Mammary epithelial cell (primary cell): ENCODE measurements at regions of chr2 and their contacts with region 1.

Region 1: DNA sequence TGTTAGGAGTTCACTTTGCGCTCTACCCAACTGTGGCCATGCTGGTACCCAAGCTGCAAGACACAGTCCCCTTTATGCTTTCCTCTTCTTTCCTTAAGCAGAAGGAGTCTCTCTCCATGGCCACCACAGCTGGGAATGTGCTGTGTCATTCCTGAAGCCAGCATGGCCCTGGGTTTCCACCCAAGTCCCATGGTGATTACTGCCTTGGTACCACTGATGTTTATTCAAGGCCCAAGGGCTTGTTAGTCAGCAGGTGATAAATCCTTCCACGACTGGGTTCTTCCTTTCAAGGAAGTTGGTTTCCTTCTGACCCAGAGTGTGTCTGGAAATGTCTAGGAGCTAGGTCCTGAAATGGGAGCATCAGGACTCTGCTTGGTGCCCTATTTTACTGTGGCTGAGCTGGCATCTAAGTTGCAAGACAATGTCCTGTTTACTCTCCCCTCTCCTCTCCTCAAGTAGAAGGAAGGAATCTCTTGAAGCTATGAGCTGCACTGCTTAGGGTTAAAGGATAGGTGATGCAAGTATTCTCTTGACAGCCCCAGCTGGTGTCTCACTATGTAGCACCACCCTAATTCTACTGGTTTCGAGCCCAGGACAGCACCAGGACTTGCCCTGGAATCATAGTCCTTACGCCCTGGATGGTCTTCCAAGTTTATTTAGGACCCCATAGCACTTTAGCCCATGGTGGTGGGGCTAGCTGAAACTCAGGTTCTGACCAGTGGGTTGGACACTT is 18.7 kb upstream of the NUP35 start:
- DNase-seq: peak; percentile 52
- H3K4me3 ChIP-seq: no peak overlapping the region
- H3K27ac ChIP-seq: no peak overlapping the region
- H3K4me1 ChIP-seq: no peaks in the 10 kb centered on the region
- H3K27me3 ChIP-seq: no peaks in the 10 kb centered on the region
- CTCF ChIP-seq: no peak

Region 2: GRCh38 chr2:183068561-183068960 is 37.0 kb before region 1 on chr2:
- CTCF ChIA-PET with region 1: no interaction called
- dilution Hi-C with region 1: loop called (anchors 5 kb)
- in situ Hi-C with region 1: no loop called
- intact Hi-C with region 1: no loop called
- DNase-seq: no peak
- H3K4me3 ChIP-seq: no peak overlapping the region
- H3K27ac ChIP-seq: no peak overlapping the region
- H3K4me1 ChIP-seq: no peaks in the 10 kb centered on the region
- H3K27me3 ChIP-seq: no peaks in the 10 kb centered on the region
- CTCF ChIP-seq: no peak